Common myeloid progenitor, CD34-positive (primary cell): ENCODE measurements at regions of chrX and their contacts with region 1.

Region 1: GRCh38 chrX:41164449-41164848 is 79.2 kb downstream of the USP9X start:
- DNase-seq: peak; percentile 9 to 62 (median 62)
- H3K4me3 ChIP-seq: no peak overlapping the region
- H3K27ac ChIP-seq: no peak overlapping the region
- H3K4me1 ChIP-seq: peaks cover 0 to 5% (median 2%) of the 10 kb centered on the region in 4 experiments
- H3K27me3 ChIP-seq: no peaks in the 10 kb centered on the region

Region 2: DNA sequence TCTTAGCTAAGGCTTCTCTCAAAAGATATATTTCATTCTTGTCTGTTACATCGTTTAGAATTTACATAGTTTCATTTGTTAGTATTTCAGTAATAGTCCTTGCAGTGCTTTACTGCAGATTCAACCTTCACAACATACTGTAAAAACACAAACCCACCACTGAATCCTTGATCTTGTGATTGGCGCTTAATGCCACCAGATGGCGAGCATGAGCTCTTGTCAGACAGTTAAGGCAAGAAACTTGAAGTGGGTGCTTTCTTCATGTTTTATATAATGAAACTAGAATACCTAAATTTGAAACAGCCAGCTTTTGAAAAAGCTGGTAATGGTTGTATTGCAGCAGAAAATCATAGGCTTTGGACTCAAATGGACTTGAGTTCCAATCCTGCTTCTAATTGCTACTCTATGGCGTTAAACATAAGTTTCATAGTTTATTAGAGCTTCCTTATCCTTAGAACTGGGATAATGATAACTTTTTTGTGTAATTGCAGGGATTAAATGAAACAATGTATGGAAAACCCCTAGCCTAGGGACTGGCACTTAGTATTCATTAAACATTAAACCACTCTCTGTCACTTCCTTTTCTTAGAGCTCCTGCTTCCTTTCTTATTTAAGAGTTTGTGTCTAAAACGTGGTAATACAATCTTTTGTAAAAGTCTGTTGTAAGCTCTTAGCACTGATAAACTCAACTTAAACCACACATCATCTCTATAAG is 15.9 kb after region 1 on chrX:
- CTCF ChIA-PET with region 1: interaction called, 24 read pairs
- POLR2A ChIA-PET with region 1: no interaction called
- DNase-seq: peak; percentile 70 to 93 (median 92)
- H3K4me3 ChIP-seq: peak overlapping the region in 1 of 7 experiments; percentile 42
- H3K27ac ChIP-seq: peak overlapping the region; percentile 55 to 59
- H3K4me1 ChIP-seq: peaks cover 3 to 15% (median 7%) of the 10 kb centered on the region in 4 experiments
- H3K27me3 ChIP-seq: no peaks in the 10 kb centered on the region